ENCODE measurements at regions of chr16 and their contacts with region 1.

Region 1: GRCh38 chr16:75379911-75380847 is 53.1 kb downstream of the CFDP1 start:
- DNase-seq: peak in 7 of 9 donors; percentile 45 to 67 (median 64)
- ATAC-seq: peak; percentile 92
- H3K4me3 ChIP-seq: peak overlapping the region; percentile 28
- H3K4me3 Mint-ChIP-seq: peak overlapping the region; percentile 73 to 90 (median 83)
- H3K27ac ChIP-seq: no peak overlapping the region
- H3K27ac Mint-ChIP-seq: peak overlapping the region; percentile 17 to 84 (median 63)
- H3K4me1 ChIP-seq: peaks cover 15 to 27% of the 10 kb centered on the region in 2 donors
- H3K4me1 Mint-ChIP-seq: peaks cover 37 to 51% (median 48%) of the 10 kb centered on the region in 7 donors
- H3K27me3 ChIP-seq: no peaks in the 10 kb centered on the region
- H3K27me3 Mint-ChIP-seq: peaks cover 0 to 42% (median 0%) of the 10 kb centered on the region in 5 donors

Region 2: DNA sequence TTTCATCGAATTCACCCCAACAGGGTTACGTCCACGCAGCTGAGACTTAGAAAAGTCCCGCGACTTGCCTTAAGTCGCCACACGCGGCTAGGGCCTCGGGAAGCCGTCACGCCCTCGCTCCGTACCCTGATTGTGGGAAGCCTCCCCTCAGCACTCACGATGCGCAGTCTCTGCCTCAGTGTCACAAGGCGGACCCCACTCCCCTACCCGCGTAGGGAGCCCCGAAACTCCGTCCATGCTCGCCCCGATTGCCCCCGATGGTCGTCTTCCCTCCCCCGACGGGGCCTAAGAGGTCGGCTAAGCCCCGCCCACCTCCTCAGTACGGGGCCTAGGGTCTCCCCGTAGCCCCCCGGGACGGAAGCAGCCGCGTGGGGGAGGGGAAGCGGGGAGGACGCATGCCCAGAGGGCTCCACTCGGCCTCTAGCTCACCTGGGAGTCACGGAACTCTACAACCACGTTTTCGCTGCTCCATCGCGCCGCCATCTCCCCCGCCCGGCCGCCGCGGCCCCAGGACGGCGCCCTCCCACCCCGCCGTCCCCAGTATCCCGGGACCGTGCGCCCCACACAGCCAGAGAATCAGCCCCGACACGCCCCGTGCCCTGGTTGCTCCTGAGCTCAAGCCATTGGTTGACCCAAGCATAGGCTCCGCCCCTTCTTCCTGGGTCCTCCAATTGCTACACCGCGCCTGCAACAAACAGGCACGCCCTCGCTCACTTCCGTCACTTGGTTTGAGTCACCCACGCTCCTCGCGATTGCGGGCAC is 395.5 kb before region 1 on chr16 and contains the start of gene WDR59:
- CTCF ChIA-PET with region 1: no interaction called
- POLR2A ChIA-PET with region 1: no interaction called
- intact Hi-C with region 1: loop called in 1 of 2 experiments (anchors 5 kb)
- DNase-seq: peak; percentile 87 to 99 (median 98)
- ATAC-seq: peak; percentile 100
- H3K4me3 ChIP-seq: peak within 1 kb of the TSS; percentile 98
- H3K4me3 Mint-ChIP-seq: peak within 1 kb of the TSS; percentile 90 to 98 (median 95)
- H3K27ac ChIP-seq: peak within 1 kb of the TSS; percentile 86
- H3K27ac Mint-ChIP-seq: peak within 1 kb of the TSS; percentile 72 to 96 (median 92)
- H3K4me1 ChIP-seq: peaks cover 5 to 6% of the 10 kb centered on the region in 2 donors
- H3K4me1 Mint-ChIP-seq: peaks cover 0 to 27% (median 23%) of the 10 kb centered on the region in 7 donors
- H3K27me3 ChIP-seq: no peaks in the 10 kb centered on the region
- H3K27me3 Mint-ChIP-seq: no peaks in the 10 kb centered on the region
- total RNA-seq, gene WDR59: 82.7 to 130 (median 84.7) TPM

Region 3: GRCh38 chr16:75319513-75320411 is 60.4 kb before region 1 on chr16:
- CTCF ChIA-PET with region 1: interaction called, 5 read pairs
- POLR2A ChIA-PET with region 1: interaction called, 4 read pairs
- intact Hi-C with region 1: loop called (anchors 2 to 5 kb)
- DNase-seq: peak in 6 of 9 donors; percentile 8 to 48 (median 28)
- ATAC-seq: peak; percentile 42
- H3K4me3 ChIP-seq: peak overlapping the region; percentile 52
- H3K4me3 Mint-ChIP-seq: peak overlapping the region; percentile 51 to 81 (median 75)
- H3K27ac ChIP-seq: no peak overlapping the region
- H3K27ac Mint-ChIP-seq: peak overlapping the region in 4 of 9 donors; percentile 38 to 64 (median 56)
- H3K4me1 ChIP-seq: peaks cover 18 to 19% of the 10 kb centered on the region in 2 donors
- H3K4me1 Mint-ChIP-seq: peaks cover 21 to 41% (median 32%) of the 10 kb centered on the region in 7 donors
- H3K27me3 ChIP-seq: no peaks in the 10 kb centered on the region
- H3K27me3 Mint-ChIP-seq: peaks cover 0 to 31% (median 10%) of the 10 kb centered on the region in 5 donors